CD4-positive, alpha-beta memory T cell (primary cell): ENCODE measurements at regions of chr18 and their contacts with region 1.

Region 1: GRCh38 chr18:2589345-2590068 is 18.1 kb downstream of the NDC80 start:
- DNase-seq: peak in 4 of 5 donors; percentile 15 to 37 (median 22)
- H3K4me3 ChIP-seq: peak overlapping the region in 1 of 2 donors; percentile 38
- H3K4me3 Mint-ChIP-seq: peak overlapping the region in 7 of 8 donors; percentile 63 to 88 (median 76)
- H3K27ac ChIP-seq: peak overlapping the region; percentile 52
- H3K27ac Mint-ChIP-seq: peak overlapping the region; percentile 65 to 95 (median 93)
- H3K4me1 ChIP-seq: peaks cover 48% of the 10 kb centered on the region
- H3K4me1 Mint-ChIP-seq: peaks cover 22 to 57% (median 37%) of the 10 kb centered on the region in 4 donors
- H3K27me3 ChIP-seq: no peaks in the 10 kb centered on the region
- H3K27me3 Mint-ChIP-seq: no peaks in the 10 kb centered on the region

Region 2: DNA sequence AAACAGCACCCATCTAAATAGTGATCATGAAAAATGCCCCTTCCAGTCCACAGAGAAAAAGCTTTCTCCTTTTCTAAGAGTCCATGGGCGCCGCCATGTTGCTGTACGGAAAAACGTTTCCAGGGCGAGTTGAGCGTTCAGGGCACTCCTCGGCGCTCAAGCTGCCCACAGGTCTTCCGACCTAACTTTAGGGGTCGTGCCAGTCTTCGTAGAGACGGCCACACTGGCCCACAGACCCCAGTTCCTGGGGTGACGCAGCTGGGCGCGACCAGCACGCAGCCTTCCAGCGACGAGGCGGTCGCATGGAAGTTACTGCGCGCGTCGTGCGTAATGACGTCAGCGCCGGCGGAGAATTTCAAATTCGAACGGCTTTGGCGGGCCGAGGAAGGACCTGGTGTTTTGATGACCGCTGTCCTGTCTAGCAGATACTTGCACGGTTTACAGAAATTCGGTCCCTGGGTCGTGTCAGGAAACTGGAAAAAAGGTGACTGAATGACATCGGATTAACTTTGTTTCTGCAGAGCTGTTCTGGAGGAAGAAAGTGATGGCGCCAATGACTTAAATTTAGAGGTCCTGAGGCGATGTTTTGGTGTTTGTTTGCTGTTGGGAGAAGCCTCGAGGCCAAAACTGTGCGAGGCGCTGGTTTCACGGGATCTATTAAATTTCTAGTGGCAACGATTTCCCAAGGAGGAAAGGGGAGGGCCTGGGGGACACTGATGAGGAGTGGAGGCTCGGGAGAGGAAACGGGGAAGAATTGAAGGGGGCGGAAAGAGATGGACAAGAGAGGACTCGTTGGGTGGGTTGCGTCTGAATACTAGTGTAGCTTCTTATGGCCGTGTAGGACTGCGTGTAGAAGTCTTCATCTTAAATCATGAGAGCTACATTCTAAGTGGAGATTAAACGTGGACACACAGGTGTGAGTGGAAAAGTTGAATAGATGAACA is 18.0 kb before region 1 on chr18 and contains the starts of genes METTL4 and NDC80:
- CTCF ChIA-PET with region 1: interaction called, 13 read pairs
- POLR2A ChIA-PET with region 1: interaction called, 66 read pairs
- intact Hi-C with region 1: loop called (anchors 2 kb)
- DNase-seq: peak; percentile 84 to 91 (median 85)
- H3K4me3 ChIP-seq: peak within 1 kb of the TSS; percentile 80 to 88
- H3K4me3 Mint-ChIP-seq: peak within 1 kb of the TSS; percentile 99 to 100 (median 100)
- H3K27ac ChIP-seq: peak within 1 kb of the TSS; percentile 99
- H3K27ac Mint-ChIP-seq: peak within 1 kb of the TSS; percentile 99 to 100 (median 100)
- H3K4me1 ChIP-seq: peaks cover 44% of the 10 kb centered on the region
- H3K4me1 Mint-ChIP-seq: peaks cover 42 to 74% (median 56%) of the 10 kb centered on the region in 4 donors
- H3K27me3 ChIP-seq: no peaks in the 10 kb centered on the region
- H3K27me3 Mint-ChIP-seq: no peaks in the 10 kb centered on the region
- total RNA-seq, gene METTL4: 25.8 to 29.3 TPM
- total RNA-seq, gene NDC80: 3.8 to 6.2 TPM

Region 3: GRCh38 chr18:2627821-2628276 is 38.3 kb after region 1 on chr18:
- CTCF ChIA-PET with region 1: interaction called, 4 read pairs
- POLR2A ChIA-PET with region 1: interaction called, 10 read pairs
- intact Hi-C with region 1: no loop called
- DNase-seq: no peak
- H3K4me3 ChIP-seq: no peak overlapping the region
- H3K4me3 Mint-ChIP-seq: peak overlapping the region in 1 of 8 donors; percentile 14
- H3K27ac ChIP-seq: no peak overlapping the region
- H3K27ac Mint-ChIP-seq: peak overlapping the region in 1 of 7 donors; percentile 30
- H3K4me1 ChIP-seq: peaks cover 10% of the 10 kb centered on the region
- H3K4me1 Mint-ChIP-seq: peaks cover 14 to 29% (median 25%) of the 10 kb centered on the region in 4 donors
- H3K27me3 ChIP-seq: no peaks in the 10 kb centered on the region
- H3K27me3 Mint-ChIP-seq: no peaks in the 10 kb centered on the region

Region 4: GRCh38 chr18:2641638-2642037 is 52.1 kb after region 1 on chr18:
- CTCF ChIA-PET with region 1: interaction called, 24 read pairs
- POLR2A ChIA-PET with region 1: interaction called, 121 read pairs
- intact Hi-C with region 1: loop called (anchors 5 kb)
- DNase-seq: peak in 4 of 5 donors; percentile 52 to 67 (median 59)
- H3K4me3 ChIP-seq: peak overlapping the region in 1 of 2 donors; percentile 8
- H3K4me3 Mint-ChIP-seq: peak overlapping the region; percentile 73 to 89 (median 84)
- H3K27ac ChIP-seq: peak overlapping the region; percentile 73
- H3K27ac Mint-ChIP-seq: peak overlapping the region in 3 of 7 donors; percentile 96 to 97 (median 96)
- H3K4me1 ChIP-seq: peaks cover 86% of the 10 kb centered on the region
- H3K4me1 Mint-ChIP-seq: peaks cover 32 to 55% (median 45%) of the 10 kb centered on the region in 4 donors
- H3K27me3 ChIP-seq: no peaks in the 10 kb centered on the region
- H3K27me3 Mint-ChIP-seq: peaks cover 0 to 2% of the 10 kb centered on the region in 2 donors

Region 5: GRCh38 chr18:2994603-2995432 is 405.3 kb after region 1 on chr18:
- CTCF ChIA-PET with region 1: no interaction called
- POLR2A ChIA-PET with region 1: no interaction called
- intact Hi-C with region 1: no loop called
- DNase-seq: peak; percentile 75 to 84 (median 79)
- H3K4me3 ChIP-seq: peak overlapping the region in 1 of 2 donors; percentile 29
- H3K4me3 Mint-ChIP-seq: peak overlapping the region; percentile 53 to 81 (median 68)
- H3K27ac ChIP-seq: peak overlapping the region; percentile 28
- H3K27ac Mint-ChIP-seq: peak overlapping the region; percentile 61 to 94 (median 90)
- H3K4me1 ChIP-seq: peaks cover 62% of the 10 kb centered on the region
- H3K4me1 Mint-ChIP-seq: peaks cover 57 to 87% (median 73%) of the 10 kb centered on the region in 4 donors
- H3K27me3 ChIP-seq: no peaks in the 10 kb centered on the region
- H3K27me3 Mint-ChIP-seq: no peaks in the 10 kb centered on the region